Activated B cell treated with CpG ODN at 0.5 μM for 24 hours (primary cell): ENCODE measurements at regions of chr6 and their contacts with region 1.

Region 1: GRCh38 chr6:149431905-149432775 is 32.1 kb downstream of the SUMO4 start:
- DNase-seq: peak; percentile 77
- ATAC-seq: peak; percentile 96
- H3K4me3 Mint-ChIP-seq: peak overlapping the region; percentile 44
- H3K27ac Mint-ChIP-seq: no peak overlapping the region
- H3K4me1 Mint-ChIP-seq: peaks cover 4% of the 10 kb centered on the region
- H3K27me3 Mint-ChIP-seq: no peaks in the 10 kb centered on the region
- CTCF ChIP-seq: no peak

Region 2: GRCh38 chr6:148559848-148560433 is 872.2 kb before region 1 on chr6:
- CTCF ChIA-PET with region 1: no interaction called
- POLR2A ChIA-PET with region 1: no interaction called
- intact Hi-C with region 1: loop called (anchors 5 kb)
- DNase-seq: peak; percentile 74
- ATAC-seq: peak; percentile 87
- H3K4me3 Mint-ChIP-seq: peak overlapping the region; percentile 57
- H3K27ac Mint-ChIP-seq: no peak overlapping the region
- H3K4me1 Mint-ChIP-seq: peaks cover 15% of the 10 kb centered on the region
- H3K27me3 Mint-ChIP-seq: peaks cover 9% of the 10 kb centered on the region
- CTCF ChIP-seq: peak; percentile 18

Region 3: DNA sequence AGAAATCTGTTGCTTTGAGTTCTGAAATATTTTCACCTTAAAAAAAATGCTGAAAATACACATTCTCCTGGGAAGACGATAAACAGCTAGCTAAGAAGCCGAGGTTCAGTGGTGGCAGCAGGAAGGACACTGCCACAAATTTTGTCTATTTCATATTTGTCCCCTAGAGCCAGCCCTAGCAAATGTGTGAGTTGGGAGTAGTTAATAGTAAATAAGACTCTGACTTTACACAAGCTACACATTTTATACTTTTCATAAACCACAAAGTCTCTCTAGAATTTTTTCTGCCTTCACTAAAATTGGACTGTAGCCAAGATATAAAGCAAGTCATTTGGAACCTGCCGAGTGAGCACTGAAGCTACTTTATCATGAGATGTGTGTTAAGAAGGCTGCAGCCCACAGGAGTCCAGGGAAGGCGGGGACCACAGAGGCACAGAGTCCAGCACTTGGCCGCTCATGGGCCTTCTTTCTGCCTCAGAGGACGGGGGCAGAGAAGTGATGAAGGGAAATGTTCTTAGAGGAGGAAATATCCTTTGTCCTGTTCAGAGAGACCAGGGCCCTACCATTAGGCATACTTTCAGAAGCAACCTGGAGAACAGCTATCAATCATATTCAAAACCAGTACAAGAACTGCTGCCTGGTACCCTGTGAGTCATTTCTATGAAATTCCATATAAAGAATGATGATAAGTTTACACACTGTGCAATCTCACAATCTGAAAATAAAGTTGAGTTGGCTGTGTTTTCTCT is 356.4 kb before region 1 on chr6:
- CTCF ChIA-PET with region 1: interaction called, 19 read pairs
- POLR2A ChIA-PET with region 1: no interaction called
- intact Hi-C with region 1: no loop called
- DNase-seq: no peak
- ATAC-seq: no peak
- H3K4me3 Mint-ChIP-seq: no peak overlapping the region
- H3K27ac Mint-ChIP-seq: no peak overlapping the region
- H3K4me1 Mint-ChIP-seq: peaks cover 9% of the 10 kb centered on the region
- H3K27me3 Mint-ChIP-seq: no peaks in the 10 kb centered on the region
- CTCF ChIP-seq: no peak

Region 4: DNA sequence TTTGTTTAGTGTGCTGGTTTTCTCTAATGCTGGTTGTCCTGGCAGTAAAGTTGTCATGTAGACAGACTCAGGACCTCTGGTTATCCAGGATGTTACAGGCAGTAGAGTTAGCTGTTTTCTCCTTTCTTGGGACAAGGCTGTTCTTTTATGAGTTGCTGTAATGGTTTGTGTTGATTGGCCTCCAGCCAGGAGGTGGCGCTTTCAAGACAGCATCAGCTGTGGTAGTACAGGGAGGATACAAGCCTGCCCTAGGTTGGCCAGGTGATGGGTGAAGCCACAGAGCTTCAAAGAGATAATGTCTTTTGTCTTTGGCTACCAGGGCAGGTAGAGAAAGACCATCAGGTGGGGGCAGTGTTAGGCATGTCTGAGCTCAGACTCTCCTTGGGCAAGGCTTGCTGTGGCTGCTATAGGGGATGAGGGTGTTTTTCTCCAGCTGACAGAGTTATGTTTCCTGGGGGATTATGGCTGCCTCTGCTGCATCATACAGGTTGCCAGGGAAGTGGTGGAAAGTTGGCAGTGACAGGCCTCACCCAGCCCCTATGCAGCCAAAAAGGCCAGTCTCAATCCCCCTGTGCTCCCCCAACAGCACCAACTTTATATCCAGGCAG is 241.8 kb before region 1 on chr6:
- CTCF ChIA-PET with region 1: interaction called, 76 read pairs
- POLR2A ChIA-PET with region 1: interaction called, 4 read pairs
- intact Hi-C with region 1: loop called (anchors 1 kb)
- DNase-seq: peak; percentile 56
- ATAC-seq: peak; percentile 82
- H3K4me3 Mint-ChIP-seq: no peak overlapping the region
- H3K27ac Mint-ChIP-seq: no peak overlapping the region
- H3K4me1 Mint-ChIP-seq: peaks cover 9% of the 10 kb centered on the region
- H3K27me3 Mint-ChIP-seq: no peaks in the 10 kb centered on the region
- CTCF ChIP-seq: no peak

Region 5: DNA sequence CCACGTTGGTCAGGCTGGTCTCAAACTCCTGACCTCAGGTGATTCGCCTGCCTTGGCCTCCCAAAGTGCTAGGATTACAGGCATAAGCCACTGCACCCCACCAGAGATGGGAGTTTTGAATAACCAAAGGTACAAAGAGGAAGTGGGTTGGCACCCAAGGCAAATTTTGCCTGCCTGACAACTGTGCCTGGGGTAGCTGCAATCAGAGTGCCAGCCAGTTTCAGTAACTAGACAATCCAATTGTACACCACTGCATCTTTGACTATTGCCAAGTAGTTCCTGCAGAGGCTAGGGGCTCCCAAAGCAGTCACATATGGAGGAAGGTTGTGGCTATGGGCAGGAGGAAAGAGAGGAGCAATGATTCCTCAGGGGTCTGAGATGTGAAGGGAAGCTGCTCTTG is 36.0 kb after region 1 on chr6:
- CTCF ChIA-PET with region 1: interaction called, 10 read pairs
- POLR2A ChIA-PET with region 1: no interaction called
- intact Hi-C with region 1: no loop called
- DNase-seq: peak; percentile 37
- ATAC-seq: peak; percentile 48
- H3K4me3 Mint-ChIP-seq: peak overlapping the region; percentile 83
- H3K27ac Mint-ChIP-seq: peak overlapping the region; percentile 95
- H3K4me1 Mint-ChIP-seq: peaks cover 95% of the 10 kb centered on the region
- H3K27me3 Mint-ChIP-seq: no peaks in the 10 kb centered on the region
- CTCF ChIP-seq: no peak

Region 6: DNA sequence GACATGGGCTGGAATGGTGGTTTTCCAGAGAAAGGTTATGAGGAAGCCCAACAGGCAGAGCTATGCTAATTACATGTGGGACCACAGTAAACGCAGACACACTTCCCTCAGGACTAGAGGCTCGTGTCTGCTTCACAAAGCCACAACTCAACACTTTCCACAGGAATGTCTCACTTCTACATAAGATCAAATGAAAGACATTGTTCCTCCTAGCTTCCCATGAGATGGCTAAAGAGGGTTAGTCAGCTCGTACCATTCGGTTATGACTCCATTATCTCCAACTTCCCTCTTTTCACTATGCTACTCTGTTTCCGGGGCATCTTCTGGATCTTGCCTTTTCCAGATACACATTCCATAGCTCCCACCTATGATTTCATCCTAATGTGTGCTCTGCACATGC is 81.8 kb after region 1 on chr6:
- CTCF ChIA-PET with region 1: interaction called, 43 read pairs
- POLR2A ChIA-PET with region 1: no interaction called
- intact Hi-C with region 1: loop called (anchors 1 kb)
- DNase-seq: no peak
- ATAC-seq: no peak
- H3K4me3 Mint-ChIP-seq: no peak overlapping the region
- H3K27ac Mint-ChIP-seq: peak overlapping the region; percentile 50
- H3K4me1 Mint-ChIP-seq: peaks cover 23% of the 10 kb centered on the region
- H3K27me3 Mint-ChIP-seq: no peaks in the 10 kb centered on the region
- CTCF ChIP-seq: no peak